Endothelial cell of umbilical vein (primary cell): ENCODE measurements at regions of chr1 and their contacts with region 1.

Region 1: GRCh38 chr1:100400404-100400803 is 48.1 kb downstream of the CDC14A start:
- DNase-seq: peak; percentile 72
- H3K4me3 ChIP-seq: peak overlapping the region in 1 of 3 experiments; percentile 7
- H3K27ac ChIP-seq: no peak overlapping the region
- H3K4me1 ChIP-seq: peaks cover 17% of the 10 kb centered on the region
- H3K27me3 ChIP-seq: no peaks in the 10 kb centered on the region
- CTCF ChIP-seq: no peak
- POLR2A ChIP-seq: no peak

Region 2: DNA sequence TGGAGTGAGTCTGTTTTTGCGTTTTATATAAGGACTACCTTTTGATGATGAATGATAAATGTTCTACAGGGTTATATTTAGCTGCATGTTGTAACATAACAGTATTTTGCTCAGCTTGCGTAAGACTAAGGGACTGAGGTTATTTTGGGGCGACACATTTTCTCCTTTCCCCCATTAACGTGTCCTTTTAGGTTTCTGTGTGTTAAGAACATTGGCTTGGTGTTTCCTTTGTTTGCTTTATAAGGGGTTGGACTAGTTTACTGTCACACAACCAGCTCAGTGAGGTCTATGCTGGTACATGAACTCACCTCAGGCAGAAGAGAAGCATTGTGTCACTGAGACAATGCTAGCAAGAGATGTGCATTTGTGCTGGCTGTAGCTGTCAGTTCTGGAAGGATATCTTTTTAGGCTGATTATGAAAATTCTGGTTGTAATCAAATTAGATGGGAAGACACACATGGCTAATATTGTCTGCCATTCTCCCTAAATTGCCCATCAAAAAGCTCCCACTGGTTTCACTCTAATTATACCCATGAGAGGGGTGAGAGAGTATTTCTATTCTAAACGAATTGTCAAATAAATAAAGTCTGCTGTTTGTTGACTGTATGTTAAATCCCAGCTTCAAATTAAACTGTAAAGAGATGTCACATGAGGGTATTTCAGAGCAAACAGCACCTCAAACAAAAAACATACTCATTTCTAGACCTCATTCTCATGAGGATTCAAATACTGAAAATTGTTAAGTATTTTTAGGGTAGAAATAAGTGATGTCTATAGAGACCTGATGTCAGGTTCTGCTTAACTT is 14.5 kb after region 1 on chr1:
- CTCF ChIA-PET with region 1: interaction called, 3 read pairs
- POLR2A ChIA-PET with region 1: no interaction called
- dilution Hi-C with region 1: no loop called
- intact Hi-C with region 1: loop called (anchors 2 kb)
- DNase-seq: no peak
- H3K4me3 ChIP-seq: no peak overlapping the region
- H3K27ac ChIP-seq: no peak overlapping the region
- H3K4me1 ChIP-seq: peaks cover 17% of the 10 kb centered on the region
- H3K27me3 ChIP-seq: no peaks in the 10 kb centered on the region
- CTCF ChIP-seq: no peak
- POLR2A ChIP-seq: no peak

Region 3: DNA sequence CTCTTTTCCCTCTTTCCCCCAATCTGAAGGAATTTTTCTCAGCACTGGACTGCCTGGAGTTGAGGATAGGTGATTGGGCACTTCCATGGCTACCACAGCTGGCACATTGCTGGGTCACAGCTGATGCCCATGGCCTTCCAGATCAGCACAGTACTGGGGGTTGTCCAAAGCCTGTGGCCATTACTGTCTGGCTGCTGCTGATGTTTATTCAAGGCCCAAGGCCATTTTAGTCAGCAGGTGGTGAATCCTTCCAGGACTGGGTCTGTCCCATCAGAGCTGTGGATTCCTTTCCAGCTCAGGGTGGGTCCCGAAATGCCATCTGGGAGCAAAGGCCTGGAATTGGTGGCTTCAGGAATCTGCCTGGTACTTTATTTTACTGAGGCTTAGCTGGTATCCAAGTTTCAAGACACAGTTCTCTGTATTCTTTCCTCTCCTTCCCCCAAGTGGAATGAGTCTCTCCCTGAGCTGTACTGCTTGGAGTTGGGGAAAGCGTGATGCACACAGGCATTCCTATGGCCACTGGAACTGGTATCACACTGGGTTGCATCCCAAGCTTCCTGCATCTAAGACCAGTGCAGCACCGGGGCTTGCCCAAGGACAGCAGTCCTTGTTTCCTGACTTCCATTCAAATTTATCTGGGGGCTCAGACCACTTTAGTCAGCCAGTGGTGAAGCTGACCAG is 156.7 kb after region 1 on chr1:
- CTCF ChIA-PET with region 1: no interaction called
- POLR2A ChIA-PET with region 1: no interaction called
- dilution Hi-C with region 1: no loop called
- intact Hi-C with region 1: no loop called
- DNase-seq: no peak
- H3K4me3 ChIP-seq: no peak overlapping the region
- H3K27ac ChIP-seq: no peak overlapping the region
- H3K4me1 ChIP-seq: no peaks in the 10 kb centered on the region
- H3K27me3 ChIP-seq: no peaks in the 10 kb centered on the region
- CTCF ChIP-seq: no peak
- POLR2A ChIP-seq: no peak